Common myeloid progenitor, CD34-positive (primary cell): ENCODE measurements at regions of chr7 and their contacts with region 1.

Region 1: DNA sequence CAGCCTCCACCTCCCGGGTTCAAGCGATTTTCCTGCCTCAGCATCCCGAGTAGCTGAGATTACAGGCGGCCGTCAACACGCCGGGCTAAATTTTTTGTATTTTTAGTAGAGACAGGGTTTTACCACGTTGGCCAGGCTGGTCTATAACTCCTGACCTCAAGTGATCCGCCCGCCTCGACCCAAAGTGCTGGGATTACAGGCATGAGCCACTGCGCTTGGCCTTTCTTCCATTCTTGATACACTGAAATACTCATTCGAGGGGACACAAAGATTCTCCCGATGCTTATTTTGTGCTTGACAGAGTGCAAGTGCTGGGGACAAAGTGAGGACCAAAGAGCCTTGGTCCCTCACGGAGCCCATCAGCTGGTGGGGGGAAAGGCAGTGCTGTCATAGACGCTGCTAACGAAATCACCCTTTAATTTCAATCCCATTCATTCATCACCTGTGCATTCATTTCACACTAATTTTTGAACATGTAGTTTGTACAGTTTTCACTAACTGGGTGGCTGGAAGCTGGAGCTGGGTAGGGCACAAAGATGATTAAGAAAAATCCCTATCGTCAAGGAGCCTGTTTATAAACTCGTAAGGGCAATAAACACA is 621 bp upstream of the FAM133B start:
- DNase-seq: no peak
- H3K4me3 ChIP-seq: peak overlapping the region in 6 of 7 experiments; percentile 80 to 98 (median 92)
- H3K27ac ChIP-seq: no peak overlapping the region
- H3K4me1 ChIP-seq: peaks cover 7 to 31% (median 24%) of the 10 kb centered on the region in 4 experiments
- H3K27me3 ChIP-seq: no peaks in the 10 kb centered on the region

Region 2: GRCh38 chr7:92602352-92603088 is 11.7 kb after region 1 on chr7:
- CTCF ChIA-PET with region 1: interaction called, 27 read pairs
- POLR2A ChIA-PET with region 1: no interaction called
- DNase-seq: peak in 1 of 3 donors; percentile 25
- H3K4me3 ChIP-seq: no peak overlapping the region
- H3K27ac ChIP-seq: no peak overlapping the region
- H3K4me1 ChIP-seq: no peaks in the 10 kb centered on the region
- H3K27me3 ChIP-seq: no peaks in the 10 kb centered on the region

Region 3: DNA sequence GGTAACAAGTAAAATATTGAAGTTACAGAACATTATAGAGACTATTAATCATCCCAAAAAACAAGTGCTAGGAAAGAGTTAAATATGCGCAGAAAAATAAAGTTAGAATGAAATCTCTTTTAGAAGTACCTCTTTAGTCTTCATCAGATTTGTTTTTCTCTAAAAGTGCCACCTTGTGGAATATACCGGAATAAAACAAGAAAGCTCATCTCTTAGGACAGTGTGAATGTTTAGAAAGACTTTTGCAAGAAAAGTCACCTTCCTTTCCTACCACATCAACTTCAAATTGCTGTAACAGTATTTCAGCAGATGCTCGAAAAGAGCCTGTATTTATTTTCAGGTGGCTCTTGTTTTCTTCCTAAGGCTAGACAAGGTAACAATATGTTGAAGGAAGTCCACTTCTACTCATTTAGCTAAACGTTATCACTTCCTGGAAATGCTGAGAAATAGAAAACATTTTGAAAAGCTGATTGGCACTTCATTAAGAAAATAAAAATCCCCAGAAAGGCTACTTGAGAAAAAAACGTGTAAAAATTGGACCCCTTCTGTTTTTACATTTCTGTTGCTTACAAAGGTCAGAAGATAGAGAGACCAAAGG is 19.2 kb after region 1 on chr7:
- CTCF ChIA-PET with region 1: interaction called, 12 read pairs
- POLR2A ChIA-PET with region 1: no interaction called
- DNase-seq: peak; percentile 45 to 71 (median 71)
- H3K4me3 ChIP-seq: no peak overlapping the region
- H3K27ac ChIP-seq: peak overlapping the region in 1 of 2 experiments; percentile 38
- H3K4me1 ChIP-seq: peaks cover 0 to 7% (median 0%) of the 10 kb centered on the region in 4 experiments
- H3K27me3 ChIP-seq: no peaks in the 10 kb centered on the region

Region 4: GRCh38 chr7:92797693-92798092 is 206.9 kb after region 1 on chr7:
- CTCF ChIA-PET with region 1: no interaction called
- POLR2A ChIA-PET with region 1: no interaction called
- DNase-seq: peak in 2 of 3 donors; percentile 48 to 63
- H3K4me3 ChIP-seq: no peak overlapping the region
- H3K27ac ChIP-seq: peak overlapping the region in 1 of 2 experiments; percentile 68
- H3K4me1 ChIP-seq: peaks cover 13 to 67% (median 37%) of the 10 kb centered on the region in 4 experiments
- H3K27me3 ChIP-seq: no peaks in the 10 kb centered on the region